KBM-7 (cell line): ENCODE measurements at regions of chr3 and their contacts with region 1.

Region 1: GRCh38 chr3:193788189-193788991 is 195.4 kb downstream of the OPA1 start:
- DNase-seq: peak; percentile 72

Region 2: DNA sequence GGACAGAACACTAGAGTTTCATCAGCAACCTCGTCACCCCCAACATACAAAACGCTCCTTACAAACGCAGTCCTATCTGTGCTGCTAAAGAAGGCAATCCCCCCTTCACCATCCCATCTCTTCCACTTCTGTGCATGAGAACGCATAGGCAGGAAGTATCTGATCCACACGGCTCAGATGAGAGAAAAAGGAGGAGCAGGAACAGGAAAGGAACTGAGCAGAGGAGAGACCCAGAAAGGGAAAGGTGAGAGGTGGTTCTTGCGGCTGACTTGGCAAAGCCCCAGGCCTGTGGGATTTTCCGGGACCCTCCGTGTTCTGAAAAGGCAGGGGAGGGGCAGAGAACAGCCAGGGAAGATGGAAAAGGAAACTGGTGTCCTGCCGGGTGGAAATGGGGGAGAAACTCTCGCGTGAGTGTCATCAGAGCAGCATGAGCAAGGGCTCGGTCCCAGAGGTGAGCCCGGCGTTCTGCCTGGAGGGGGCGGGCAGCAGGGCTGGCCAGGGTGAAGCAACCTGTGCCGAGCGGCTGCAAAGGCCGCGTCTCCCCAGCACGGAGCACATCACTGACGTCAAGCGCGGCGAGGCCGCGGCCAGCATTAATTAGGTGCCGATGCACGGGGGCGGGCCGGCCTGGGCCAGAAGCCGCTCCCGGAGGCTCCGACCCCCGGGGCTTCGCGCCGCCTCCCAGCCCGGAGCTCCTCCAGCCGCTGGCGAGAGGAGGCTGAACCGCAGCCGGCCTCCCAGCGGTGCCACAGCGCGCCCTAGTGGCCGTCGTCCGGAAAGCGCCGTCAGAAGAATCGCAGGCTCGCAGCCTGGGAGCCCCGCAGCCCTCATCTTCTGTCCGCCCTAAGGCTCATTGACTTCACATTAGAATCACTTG is 526.9 kb after region 1 on chr3:
- in situ Hi-C with region 1: loop called (anchors 10 kb)
- DNase-seq: peak; percentile 91